Endothelial cell of umbilical vein (primary cell): ENCODE measurements at regions of chr6 and their contacts with region 1.

Region 1: GRCh38 chr6:117976030-117976651 is 69.1 kb downstream of the SLC35F1 start:
- DNase-seq: peak; percentile 48
- H3K4me3 ChIP-seq: no peak overlapping the region
- H3K27ac ChIP-seq: no peak overlapping the region
- H3K4me1 ChIP-seq: no peaks in the 10 kb centered on the region
- H3K27me3 ChIP-seq: no peaks in the 10 kb centered on the region
- CTCF ChIP-seq: peak; percentile 33 to 52
- POLR2A ChIP-seq: no peak

Region 2: DNA sequence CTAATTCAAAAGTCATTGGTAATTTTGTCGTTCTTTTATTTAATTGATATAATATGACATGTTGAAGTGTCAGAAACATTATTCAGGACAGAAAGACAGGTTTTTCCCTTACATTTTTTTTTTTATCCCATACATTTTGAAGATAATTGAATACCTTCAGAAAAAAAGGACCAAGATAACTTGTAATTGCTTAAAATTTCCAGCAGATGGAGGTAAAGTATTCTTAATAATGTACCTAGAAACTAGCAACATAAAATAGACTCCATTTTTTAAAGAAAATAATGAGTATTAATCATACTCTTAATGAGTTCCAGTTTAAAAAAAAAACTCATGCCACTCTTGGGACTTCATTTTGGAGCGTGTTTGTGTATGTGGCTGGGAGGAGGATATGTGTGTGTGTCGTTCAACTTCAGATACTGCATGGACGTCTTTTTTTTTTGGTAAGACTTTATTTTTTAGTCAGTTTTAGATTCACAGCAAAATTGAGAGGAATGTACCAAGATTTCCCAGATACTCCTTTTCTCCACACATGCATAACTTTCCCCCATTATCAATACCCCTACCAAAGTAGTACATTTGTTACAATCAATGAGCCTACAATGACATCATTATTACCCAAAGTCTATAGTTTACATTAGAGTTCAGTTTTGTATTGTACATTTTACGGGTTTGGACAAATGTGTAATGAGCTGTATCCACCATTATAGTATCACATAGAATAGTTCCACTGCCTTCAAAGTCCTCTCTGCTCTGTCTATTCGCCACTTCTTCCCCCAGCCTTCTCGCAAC is 629.8 kb before region 1 on chr6:
- CTCF ChIA-PET with region 1: no interaction called
- POLR2A ChIA-PET with region 1: no interaction called
- dilution Hi-C with region 1: no loop called
- intact Hi-C with region 1: loop called (anchors 1 kb)
- DNase-seq: peak; percentile 32
- H3K4me3 ChIP-seq: no peak overlapping the region
- H3K27ac ChIP-seq: no peak overlapping the region
- H3K4me1 ChIP-seq: no peaks in the 10 kb centered on the region
- H3K27me3 ChIP-seq: peaks cover under 1 to 5% of the 10 kb centered on the region in 2 experiments
- CTCF ChIP-seq: peak in 1 of 2 donors; percentile 19
- POLR2A ChIP-seq: no peak

Region 3: GRCh38 chr6:117890172-117890571 is 86.0 kb before region 1 on chr6:
- CTCF ChIA-PET with region 1: no interaction called
- POLR2A ChIA-PET with region 1: no interaction called
- dilution Hi-C with region 1: no loop called
- intact Hi-C with region 1: no loop called
- DNase-seq: no peak
- H3K4me3 ChIP-seq: no peak overlapping the region
- H3K27ac ChIP-seq: no peak overlapping the region
- H3K4me1 ChIP-seq: no peaks in the 10 kb centered on the region
- H3K27me3 ChIP-seq: no peaks in the 10 kb centered on the region
- CTCF ChIP-seq: no peak
- POLR2A ChIP-seq: no peak

Region 4: DNA sequence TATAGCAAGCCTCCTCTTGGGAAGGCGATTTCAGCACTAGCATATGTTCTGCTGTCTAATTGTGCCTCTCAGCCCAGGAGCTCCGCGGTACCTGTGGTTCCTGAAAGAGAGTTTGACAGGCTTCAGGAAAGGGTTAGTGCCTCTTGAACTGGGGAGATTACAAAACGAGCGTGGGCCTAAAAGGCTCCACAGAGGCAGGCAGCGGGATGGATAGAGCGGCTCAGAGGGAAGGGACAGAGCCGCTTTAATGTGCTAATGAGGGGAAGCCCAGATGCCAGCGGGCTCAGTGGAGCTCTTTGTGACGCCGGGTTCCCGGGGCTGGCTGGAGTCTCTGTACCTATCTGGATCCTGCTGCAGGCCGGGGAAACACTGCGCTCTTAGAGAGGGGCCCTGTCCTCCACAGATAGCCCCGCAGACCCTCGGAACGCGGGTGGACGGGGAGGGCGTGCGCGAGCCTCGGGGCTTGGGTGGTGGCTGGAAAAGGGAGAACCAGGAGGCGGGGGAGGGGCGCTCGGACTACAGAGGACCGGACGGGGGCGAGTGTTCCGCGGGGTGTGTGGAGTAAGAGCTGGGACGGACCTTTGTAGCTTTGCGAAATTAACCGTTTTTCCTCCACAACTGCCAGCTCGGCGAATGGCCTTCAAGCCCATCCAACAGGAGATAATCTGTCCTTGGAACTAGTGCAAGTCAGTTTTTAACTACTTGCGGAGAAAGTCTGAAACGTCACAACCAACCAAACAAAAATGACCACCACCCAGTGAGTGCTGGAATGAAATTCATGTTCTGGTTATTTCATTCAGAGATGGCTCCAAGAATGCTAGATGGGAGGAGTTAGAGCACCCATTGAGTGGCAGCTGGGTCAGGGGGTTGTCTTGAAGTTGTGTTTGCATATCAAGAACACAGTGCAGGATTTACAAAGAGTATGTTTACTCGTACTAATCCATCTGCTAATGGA is 56.1 kb before region 1 on chr6:
- CTCF ChIA-PET with region 1: no interaction called
- POLR2A ChIA-PET with region 1: no interaction called
- dilution Hi-C with region 1: no loop called
- intact Hi-C with region 1: no loop called
- DNase-seq: no peak
- H3K4me3 ChIP-seq: no peak overlapping the region
- H3K27ac ChIP-seq: no peak overlapping the region
- H3K4me1 ChIP-seq: no peaks in the 10 kb centered on the region
- H3K27me3 ChIP-seq: peaks cover 0 to 3% of the 10 kb centered on the region in 2 experiments
- CTCF ChIP-seq: no peak
- POLR2A ChIP-seq: no peak

Region 5: GRCh38 chr6:118509009-118509617 is 533.0 kb after region 1 on chr6:
- CTCF ChIA-PET with region 1: interaction called, 6 read pairs
- POLR2A ChIA-PET with region 1: no interaction called
- dilution Hi-C with region 1: no loop called
- intact Hi-C with region 1: loop called (anchors 2 kb)
- DNase-seq: peak; percentile 60
- H3K4me3 ChIP-seq: no peak overlapping the region
- H3K27ac ChIP-seq: no peak overlapping the region
- H3K4me1 ChIP-seq: no peaks in the 10 kb centered on the region
- H3K27me3 ChIP-seq: no peaks in the 10 kb centered on the region
- CTCF ChIP-seq: peak; percentile 48 to 54
- POLR2A ChIP-seq: no peak

Region 6: GRCh38 chr6:118580585-118581419 is 604.7 kb after region 1 on chr6:
- CTCF ChIA-PET with region 1: interaction called, 30 read pairs
- POLR2A ChIA-PET with region 1: no interaction called
- dilution Hi-C with region 1: no loop called
- intact Hi-C with region 1: loop called (anchors 1 kb)
- DNase-seq: peak; percentile 68
- H3K4me3 ChIP-seq: no peak overlapping the region
- H3K27ac ChIP-seq: no peak overlapping the region
- H3K4me1 ChIP-seq: no peaks in the 10 kb centered on the region
- H3K27me3 ChIP-seq: no peaks in the 10 kb centered on the region
- CTCF ChIP-seq: peak; percentile 54 to 56
- POLR2A ChIP-seq: no peak

Region 7: GRCh38 chr6:118800394-118801071 is 824.4 kb after region 1 on chr6:
- CTCF ChIA-PET with region 1: interaction called, 3 read pairs
- POLR2A ChIA-PET with region 1: no interaction called
- dilution Hi-C with region 1: no loop called
- intact Hi-C with region 1: loop called (anchors 2 kb)
- DNase-seq: peak; percentile 76
- H3K4me3 ChIP-seq: no peak overlapping the region
- H3K27ac ChIP-seq: no peak overlapping the region
- H3K4me1 ChIP-seq: no peaks in the 10 kb centered on the region
- H3K27me3 ChIP-seq: no peaks in the 10 kb centered on the region
- CTCF ChIP-seq: peak; percentile 83 to 86
- POLR2A ChIP-seq: no peak